Mammary epithelial cell (primary cell): ENCODE measurements at regions of chr19 and their contacts with region 1.

Region 1: GRCh38 chr19:11798391-11799330 is at the start of gene ZNF491:
- DNase-seq: peak; percentile 78
- H3K4me3 ChIP-seq: peak within 1 kb of the TSS; percentile 46 to 63 (median 54)
- H3K27ac ChIP-seq: no peak within 1 kb of the TSS
- H3K4me1 ChIP-seq: peaks cover 4% of the 10 kb centered on the region
- H3K27me3 ChIP-seq: no peaks in the 10 kb centered on the region
- CTCF ChIP-seq: peak in 1 of 2 donors; percentile 21
- total RNA-seq, gene ZNF491: 1.4 to 1.5 TPM

Region 2: GRCh38 chr19:11624069-11624463 is 174.6 kb before region 1 on chr19:
- CTCF ChIA-PET with region 1: interaction called, 12 read pairs
- dilution Hi-C with region 1: no loop called
- in situ Hi-C with region 1: no loop called
- intact Hi-C with region 1: no loop called
- DNase-seq: peak; percentile 28
- H3K4me3 ChIP-seq: no peak overlapping the region
- H3K27ac ChIP-seq: no peak overlapping the region
- H3K4me1 ChIP-seq: peaks cover 3% of the 10 kb centered on the region
- H3K27me3 ChIP-seq: no peaks in the 10 kb centered on the region
- CTCF ChIP-seq: no peak

Region 3: DNA sequence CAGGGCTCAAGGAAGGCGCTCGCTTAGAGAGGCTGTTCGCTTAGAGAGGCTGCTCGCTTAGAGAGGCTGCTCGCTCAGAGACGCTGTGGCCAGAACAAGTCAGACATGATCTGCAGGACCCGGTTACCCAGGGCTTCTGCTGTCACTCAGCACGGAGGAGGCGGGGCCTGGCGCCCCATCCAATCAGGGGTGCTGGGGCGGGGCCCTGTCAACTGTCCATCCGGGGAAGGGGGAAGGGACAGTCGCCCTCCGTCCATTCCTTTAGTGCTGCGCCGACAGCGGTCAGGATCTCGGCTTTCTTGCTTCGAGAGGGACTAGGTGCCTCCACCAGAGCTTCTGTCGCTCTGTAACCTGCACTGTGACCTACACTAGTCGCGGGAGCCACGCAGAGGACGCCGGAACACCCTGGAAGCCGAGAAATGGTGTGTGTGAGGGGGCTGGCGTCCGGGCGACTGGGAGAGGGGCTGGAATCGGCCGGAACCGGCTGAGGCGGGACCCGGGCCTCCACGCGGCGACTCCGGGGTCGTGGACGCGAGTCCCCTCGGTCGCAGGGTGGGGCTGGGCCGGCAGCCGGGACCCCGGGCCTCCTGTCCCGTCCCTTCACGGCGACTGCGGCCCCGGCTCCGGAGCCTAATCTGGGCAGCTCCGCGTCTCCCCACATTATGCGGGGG is 15.5 kb after region 1 on chr19 and contains the start of gene ZNF440:
- CTCF ChIA-PET with region 1: interaction called, 16 read pairs
- dilution Hi-C with region 1: no loop called
- in situ Hi-C with region 1: no loop called
- intact Hi-C with region 1: loop called (anchors 1 kb)
- DNase-seq: peak; percentile 92
- H3K4me3 ChIP-seq: peak within 1 kb of the TSS; percentile 95 to 97 (median 97)
- H3K27ac ChIP-seq: peak within 1 kb of the TSS; percentile 72
- H3K4me1 ChIP-seq: no peaks in the 10 kb centered on the region
- H3K27me3 ChIP-seq: no peaks in the 10 kb centered on the region
- CTCF ChIP-seq: no peak
- total RNA-seq, gene ZNF440: 8.3 to 10.4 TPM

Region 4: GRCh38 chr19:11881151-11881800 is 82.6 kb after region 1 on chr19:
- CTCF ChIA-PET with region 1: interaction called, 6 read pairs
- dilution Hi-C with region 1: no loop called
- in situ Hi-C with region 1: no loop called
- intact Hi-C with region 1: loop called (anchors 1 kb)
- DNase-seq: peak; percentile 48
- H3K4me3 ChIP-seq: no peak overlapping the region
- H3K27ac ChIP-seq: no peak overlapping the region
- H3K4me1 ChIP-seq: no peaks in the 10 kb centered on the region
- H3K27me3 ChIP-seq: no peaks in the 10 kb centered on the region
- CTCF ChIP-seq: peak; percentile 38 to 73

Region 5: DNA sequence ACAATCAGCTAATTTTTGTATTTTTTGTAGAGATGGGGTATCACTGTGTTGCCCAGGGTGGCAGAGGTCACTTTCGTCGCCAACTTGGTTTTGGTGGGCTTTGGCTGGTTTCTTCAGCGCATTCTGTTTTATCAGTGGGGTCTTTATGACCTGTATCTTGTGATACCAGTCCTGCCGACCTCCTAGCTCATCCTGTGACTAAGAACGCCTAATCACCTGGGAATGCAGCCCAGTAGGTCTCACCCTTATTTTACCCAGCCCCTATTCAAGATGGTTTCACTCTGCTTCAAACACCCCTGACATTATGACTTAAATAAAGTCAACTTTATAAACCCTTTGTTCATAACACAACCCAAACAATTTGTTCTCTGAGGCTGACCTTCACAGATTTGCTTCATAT is 257.1 kb after region 1 on chr19:
- CTCF ChIA-PET with region 1: interaction called, 9 read pairs
- dilution Hi-C with region 1: no loop called
- in situ Hi-C with region 1: no loop called
- intact Hi-C with region 1: loop called (anchors 1 kb)
- DNase-seq: no peak
- H3K4me3 ChIP-seq: no peak overlapping the region
- H3K27ac ChIP-seq: no peak overlapping the region
- H3K4me1 ChIP-seq: peaks cover 4% of the 10 kb centered on the region
- H3K27me3 ChIP-seq: peaks cover 2% of the 10 kb centered on the region
- CTCF ChIP-seq: no peak

Region 6: GRCh38 chr19:12139885-12140547 is 341.4 kb after region 1 on chr19 and contains the start of gene ZNF20:
- CTCF ChIA-PET with region 1: interaction called, 9 read pairs
- dilution Hi-C with region 1: no loop called
- in situ Hi-C with region 1: no loop called
- intact Hi-C with region 1: loop called (anchors 1 kb)
- DNase-seq: peak; percentile 91
- H3K4me3 ChIP-seq: peak within 1 kb of the TSS; percentile 61 to 99 (median 88)
- H3K27ac ChIP-seq: peak within 1 kb of the TSS; percentile 81
- H3K4me1 ChIP-seq: peaks cover 11% of the 10 kb centered on the region
- H3K27me3 ChIP-seq: no peaks in the 10 kb centered on the region
- CTCF ChIP-seq: no peak
- total RNA-seq, gene ZNF20: 5.2 to 7.3 TPM

Region 7: GRCh38 chr19:12666265-12667048 is 867.8 kb after region 1 on chr19 and contains the starts of genes MAN2B1 and WDR83:
- CTCF ChIA-PET with region 1: no interaction called
- dilution Hi-C with region 1: no loop called
- in situ Hi-C with region 1: no loop called
- intact Hi-C with region 1: loop called (anchors 5 kb)
- DNase-seq: peak; percentile 73
- H3K4me3 ChIP-seq: peak within 1 kb of the TSS; percentile 61 to 87 (median 73)
- H3K27ac ChIP-seq: peak within 1 kb of the TSS; percentile 56
- H3K4me1 ChIP-seq: peaks cover 34% of the 10 kb centered on the region
- H3K27me3 ChIP-seq: no peaks in the 10 kb centered on the region
- CTCF ChIP-seq: no peak
- total RNA-seq, gene MAN2B1: 36.3 to 57.2 TPM
- total RNA-seq, gene WDR83: 6.7 to 8.1 TPM